GM13976 (cell line): ENCODE measurements at regions of chr12 and their contacts with region 1.

Region 1: GRCh38 chr12:29519585-29520182 is 22.2 kb upstream of the OVCH1 start:
- DNase-seq: peak; percentile 25
- CTCF ChIP-seq: peak; percentile 32

Region 2: DNA sequence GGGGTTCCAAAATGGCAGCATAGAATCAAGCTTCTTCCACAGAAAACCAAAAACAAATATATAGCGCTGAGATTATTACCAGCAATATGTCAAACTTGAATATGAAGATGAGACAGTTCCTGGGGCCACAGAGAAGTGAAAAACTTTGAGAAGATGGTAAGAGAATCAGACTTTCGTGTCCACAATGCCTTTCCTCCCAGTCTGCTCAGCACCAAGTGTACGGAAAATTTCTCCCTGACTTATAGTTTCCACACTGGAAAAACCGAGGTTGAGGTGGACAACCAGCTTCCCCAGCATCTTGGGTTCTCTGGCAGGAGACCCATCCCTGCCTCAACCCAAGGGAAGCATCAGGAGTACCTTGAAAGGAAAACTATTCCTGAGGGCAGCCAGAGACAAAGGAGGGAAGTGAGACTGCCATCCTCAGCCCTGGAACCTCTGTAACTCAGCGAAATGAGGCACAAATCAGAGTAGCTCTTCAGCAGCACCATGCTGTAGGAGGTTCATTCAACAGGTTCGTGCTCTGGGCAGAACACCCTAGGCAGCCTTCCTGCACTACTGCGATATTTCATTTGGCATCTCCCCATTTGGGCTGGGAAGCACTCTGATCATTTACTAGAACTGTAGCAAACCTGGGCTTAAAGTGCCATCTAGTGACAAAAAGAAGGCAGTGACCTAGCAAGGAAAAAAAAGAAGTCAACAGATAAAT is 1287.5 kb after region 1 on chr12:
- in situ Hi-C with region 1: loop called (anchors 10 kb)
- DNase-seq: no peak
- CTCF ChIP-seq: peak; percentile 68